Posterior vena cava (tissue), 2 donors: ENCODE measurements at regions of chr9 and their contacts with region 1.

Region 1: GRCh38 chr9:113979343-113980127 is 98.6 kb downstream of the AMBP start:
- DNase-seq: no peak

Region 2: DNA sequence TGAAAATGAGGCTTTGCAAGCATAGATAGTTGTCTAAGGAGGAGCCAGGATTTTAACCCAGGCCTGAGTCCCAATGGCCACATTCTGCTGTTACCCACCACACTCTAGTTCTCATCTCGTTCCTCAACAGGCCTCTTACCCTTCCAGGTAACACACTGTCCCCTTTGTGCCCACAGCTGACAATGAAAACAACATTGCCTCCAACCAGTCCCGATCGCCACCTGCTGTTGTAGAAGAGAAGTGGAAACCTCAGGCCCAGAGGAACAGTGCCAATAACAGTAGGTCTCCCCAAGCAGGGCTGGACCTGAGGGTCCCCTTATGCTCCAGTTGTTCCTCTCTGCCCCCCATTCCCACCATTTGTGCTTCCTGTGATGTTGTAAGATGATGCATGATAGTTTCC is 68.2 kb after region 1 on chr9:
- intact Hi-C with region 1: loop called in 1 of 2 experiments (anchors 2 kb)
- DNase-seq: peak; percentile 26

Region 3: DNA sequence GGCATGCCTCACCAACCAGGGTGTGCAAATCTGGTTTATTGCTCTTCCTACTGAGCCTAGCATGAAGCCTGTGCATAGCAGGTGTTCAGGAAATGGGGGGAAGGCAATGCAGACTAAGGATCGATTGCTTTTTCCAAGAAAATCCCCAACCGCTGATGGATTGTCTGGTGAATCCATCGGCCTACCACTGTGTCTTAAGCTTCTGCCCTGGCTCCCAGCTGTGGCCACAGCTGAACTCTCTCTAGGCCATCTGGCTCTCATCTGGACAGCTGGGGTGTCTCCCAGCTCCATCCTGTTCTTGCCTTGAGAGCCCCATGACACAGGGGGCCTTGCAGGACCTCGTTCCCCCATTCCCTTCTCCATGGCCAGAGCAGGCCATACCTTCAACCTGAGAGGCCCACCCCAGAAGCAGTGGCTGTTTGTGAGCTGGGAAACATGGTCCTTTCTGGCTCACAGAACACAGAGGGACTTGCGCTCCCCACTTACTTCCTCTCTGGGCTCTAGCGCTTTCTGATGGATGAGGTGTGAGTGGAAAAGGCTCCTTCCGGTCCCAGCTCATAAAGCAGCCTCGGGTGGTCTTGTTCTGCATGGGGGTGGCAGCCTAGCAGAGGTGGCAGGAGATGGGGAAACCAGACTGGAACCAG is 217.6 kb after region 1 on chr9:
- intact Hi-C with region 1: no loop called
- DNase-seq: no peak